Activated CD8-positive, alpha-beta T cell treated with anti-CD3 and anti-CD28 coated beads for 36 hours (primary cell): ENCODE measurements at regions of chr17 and their contacts with region 1.

Region 1: DNA sequence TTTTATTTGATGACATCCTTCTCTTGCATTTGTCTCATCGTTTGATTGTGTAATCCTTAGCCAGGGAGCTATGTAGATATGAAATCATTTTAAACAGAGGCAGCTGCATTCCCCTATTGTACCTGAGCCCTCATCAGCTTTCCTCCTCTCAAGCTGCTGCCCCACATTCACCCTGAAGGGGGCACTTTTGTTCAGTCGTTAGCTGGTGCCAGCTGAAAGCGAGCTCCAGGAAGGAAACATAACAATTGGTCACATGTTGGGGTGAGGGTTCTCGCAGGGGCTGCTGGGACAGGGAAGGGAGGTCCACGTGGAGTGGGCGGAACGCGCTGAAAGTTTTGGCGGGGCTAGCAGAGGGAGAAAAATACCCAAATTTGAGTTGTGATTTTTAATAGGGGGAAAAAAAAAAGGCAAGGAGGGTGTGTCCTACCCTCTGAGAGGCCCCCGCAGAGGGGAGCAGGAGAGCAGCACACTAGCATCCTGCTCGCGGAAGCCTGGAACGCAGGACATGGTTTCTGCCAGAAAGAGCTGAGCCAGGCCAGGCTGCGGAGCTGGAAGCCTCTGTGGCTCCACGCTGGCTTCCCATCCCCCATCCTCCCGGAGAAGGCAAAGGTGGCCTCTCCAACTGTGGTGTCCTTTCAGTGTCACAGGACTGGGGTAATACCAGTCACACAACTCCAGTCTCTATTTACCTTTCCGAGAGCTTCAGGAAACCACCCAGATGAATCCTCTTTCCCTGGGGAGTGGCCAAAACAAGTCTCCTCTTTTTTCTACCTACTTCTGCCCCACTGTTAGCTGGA is 8.5 kb upstream of the MSL1 start:
- DNase-seq: peak; percentile 98
- ATAC-seq: peak; percentile 80
- H3K4me3 Mint-ChIP-seq: peak overlapping the region; percentile 75
- H3K27ac Mint-ChIP-seq: peak overlapping the region; percentile 94
- H3K4me1 Mint-ChIP-seq: peaks cover 49% of the 10 kb centered on the region
- H3K27me3 Mint-ChIP-seq: no peaks in the 10 kb centered on the region
- CTCF ChIP-seq: peak; percentile 91

Region 2: GRCh38 chr17:40026816-40027613 is 86.3 kb before region 1 on chr17:
- CTCF ChIA-PET with region 1: interaction called, 30 read pairs
- POLR2A ChIA-PET with region 1: no interaction called
- intact Hi-C with region 1: no loop called
- DNase-seq: peak; percentile 83
- ATAC-seq: peak; percentile 93
- H3K4me3 Mint-ChIP-seq: no peak overlapping the region
- H3K27ac Mint-ChIP-seq: no peak overlapping the region
- H3K4me1 Mint-ChIP-seq: peaks cover 16% of the 10 kb centered on the region
- H3K27me3 Mint-ChIP-seq: no peaks in the 10 kb centered on the region
- CTCF ChIP-seq: peak; percentile 92

Region 3: GRCh38 chr17:40075201-40075941 is 37.9 kb before region 1 on chr17:
- CTCF ChIA-PET with region 1: interaction called, 45 read pairs
- POLR2A ChIA-PET with region 1: no interaction called
- intact Hi-C with region 1: no loop called
- DNase-seq: peak; percentile 73
- ATAC-seq: peak; percentile 93
- H3K4me3 Mint-ChIP-seq: no peak overlapping the region
- H3K27ac Mint-ChIP-seq: peak overlapping the region; percentile 47
- H3K4me1 Mint-ChIP-seq: peaks cover 32% of the 10 kb centered on the region
- H3K27me3 Mint-ChIP-seq: no peaks in the 10 kb centered on the region
- CTCF ChIP-seq: peak; percentile 91

Region 4: DNA sequence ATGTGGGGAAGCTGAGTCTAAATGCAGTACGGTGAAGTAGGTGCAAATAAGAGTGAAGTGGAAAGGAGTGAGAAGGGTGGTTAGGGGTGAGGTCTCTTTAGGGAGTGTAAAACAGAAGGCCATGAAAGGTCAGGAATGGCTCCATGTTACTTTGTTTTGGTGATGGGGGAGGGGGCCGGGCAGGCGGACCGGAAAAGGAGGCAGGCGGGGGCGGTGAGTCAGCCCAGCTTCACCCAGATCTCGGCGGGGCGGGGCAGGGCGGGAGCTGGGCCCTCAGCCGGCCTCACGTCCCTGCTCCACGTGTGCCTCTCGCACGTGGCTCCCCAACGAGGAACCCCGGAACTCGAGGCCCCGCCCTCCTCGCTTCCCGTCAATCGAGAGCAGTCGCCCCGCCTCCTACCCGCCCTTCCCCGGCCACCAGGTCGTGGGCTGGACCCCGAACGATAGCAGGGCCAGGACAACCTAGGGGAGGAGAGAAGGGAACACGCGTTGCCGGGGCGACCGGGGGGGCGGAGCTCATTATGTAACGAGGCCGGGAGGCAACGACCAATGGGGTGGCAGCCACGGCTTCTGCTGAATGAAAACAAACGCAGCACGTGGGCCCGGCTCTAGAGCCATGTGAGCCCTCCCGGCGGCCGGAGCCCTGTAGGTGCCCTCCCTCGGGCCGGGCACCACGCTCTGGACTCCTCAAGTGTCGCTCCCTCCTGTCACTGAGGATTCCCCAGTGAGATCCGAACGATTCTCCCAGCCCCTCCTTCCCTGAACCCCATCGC is 14.3 kb before region 1 on chr17:
- CTCF ChIA-PET with region 1: interaction called, 136 read pairs
- POLR2A ChIA-PET with region 1: interaction called, 93 read pairs
- intact Hi-C with region 1: loop called (anchors 2 kb)
- DNase-seq: peak; percentile 100
- ATAC-seq: peak; percentile 72
- H3K4me3 Mint-ChIP-seq: peak overlapping the region; percentile 85
- H3K27ac Mint-ChIP-seq: peak overlapping the region; percentile 90
- H3K4me1 Mint-ChIP-seq: peaks cover 72% of the 10 kb centered on the region
- H3K27me3 Mint-ChIP-seq: no peaks in the 10 kb centered on the region
- CTCF ChIP-seq: no peak

Region 5: GRCh38 chr17:40139566-40140058 is 26.3 kb after region 1 on chr17:
- CTCF ChIA-PET with region 1: interaction called, 37 read pairs
- POLR2A ChIA-PET with region 1: interaction called, 21 read pairs
- intact Hi-C with region 1: no loop called
- DNase-seq: no peak
- ATAC-seq: peak; percentile 5
- H3K4me3 Mint-ChIP-seq: peak overlapping the region; percentile 81
- H3K27ac Mint-ChIP-seq: peak overlapping the region; percentile 97
- H3K4me1 Mint-ChIP-seq: peaks cover 39% of the 10 kb centered on the region
- H3K27me3 Mint-ChIP-seq: no peaks in the 10 kb centered on the region
- CTCF ChIP-seq: no peak

Region 6: DNA sequence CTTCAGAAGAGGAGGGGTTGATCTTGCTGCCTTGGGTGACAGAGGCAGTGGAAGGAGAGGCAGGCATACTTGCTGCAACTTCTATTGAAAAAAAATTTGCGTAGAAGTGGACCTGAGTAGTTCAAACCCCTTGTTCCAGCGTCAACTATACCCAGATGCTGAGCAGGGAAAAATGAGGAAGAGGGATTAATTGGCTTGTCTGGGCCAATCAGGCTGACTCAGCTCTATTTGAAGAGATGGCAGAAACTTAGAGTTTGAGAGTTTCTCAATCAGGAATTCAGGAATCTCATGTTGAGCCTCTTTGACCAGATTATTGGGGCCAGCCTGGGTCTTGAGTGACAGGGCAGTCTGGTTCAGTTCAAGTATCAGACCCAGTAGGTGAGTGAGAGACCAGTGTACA is 44.7 kb after region 1 on chr17:
- CTCF ChIA-PET with region 1: interaction called, 12 read pairs
- POLR2A ChIA-PET with region 1: interaction called, 4 read pairs
- intact Hi-C with region 1: no loop called
- DNase-seq: no peak
- ATAC-seq: no peak
- H3K4me3 Mint-ChIP-seq: no peak overlapping the region
- H3K27ac Mint-ChIP-seq: peak overlapping the region; percentile 79
- H3K4me1 Mint-ChIP-seq: peaks cover 31% of the 10 kb centered on the region
- H3K27me3 Mint-ChIP-seq: no peaks in the 10 kb centered on the region
- CTCF ChIP-seq: no peak

Region 7: GRCh38 chr17:40191237-40192208 is 78.2 kb after region 1 on chr17:
- CTCF ChIA-PET with region 1: interaction called, 57 read pairs
- POLR2A ChIA-PET with region 1: interaction called, 4 read pairs
- intact Hi-C with region 1: no loop called
- DNase-seq: peak; percentile 84
- ATAC-seq: peak; percentile 82
- H3K4me3 Mint-ChIP-seq: peak overlapping the region; percentile 87
- H3K27ac Mint-ChIP-seq: peak overlapping the region; percentile 79
- H3K4me1 Mint-ChIP-seq: peaks cover 14% of the 10 kb centered on the region
- H3K27me3 Mint-ChIP-seq: no peaks in the 10 kb centered on the region
- CTCF ChIP-seq: peak; percentile 68